ENCODE measurements at regions of chr11 and their contacts with region 1.

Region 1: GRCh38 chr11:62601394-62602140 is at the start of gene MTA2:
- DNase-seq: peak; percentile 86 to 99 (median 91)
- ATAC-seq: peak; percentile 94
- H3K4me3 ChIP-seq: peak within 1 kb of the TSS; percentile 95
- H3K27ac ChIP-seq: peak within 1 kb of the TSS; percentile 97
- H3K4me1 ChIP-seq: peaks cover 14 to 43% of the 10 kb centered on the region in 2 experiments; a peak in 4 of 5 replicates
- H3K27me3 ChIP-seq: no peaks in the 10 kb centered on the region
- CTCF ChIP-seq: no peak; a peak in 1 of 6 replicates
- EP300 ChIP-seq: no peak
- POLR2A ChIP-seq: peak; percentile 81
- RAD21 ChIP-seq: no peak
- polyA plus RNA-seq, gene MTA2: 6.2 to 9.9 TPM

Region 2: GRCh38 chr11:61602775-61603569 is 998.6 kb before region 1 on chr11:
- CTCF ChIA-PET with region 1: no interaction called
- POLR2A ChIA-PET with region 1: no interaction called
- in situ Hi-C with region 1: no loop called
- intact Hi-C with region 1: no loop called
- DNase-seq: peak; percentile 68 to 73 (median 72)
- ATAC-seq: peak; percentile 77
- H3K4me3 ChIP-seq: no peak overlapping the region
- H3K27ac ChIP-seq: no peak overlapping the region
- H3K4me1 ChIP-seq: peaks cover 0 to 9% of the 10 kb centered on the region in 2 experiments; a peak in 3 of 5 replicates
- H3K27me3 ChIP-seq: peaks cover 12 to 76% of the 10 kb centered on the region in 2 experiments
- CTCF ChIP-seq: no peak
- EP300 ChIP-seq: peak; percentile 11; the same call in 1 of the 2 replicates
- POLR2A ChIP-seq: no peak
- RAD21 ChIP-seq: no peak

Region 3: GRCh38 chr11:62567018-62567633 is 34.4 kb before region 1 on chr11:
- CTCF ChIA-PET with region 1: no interaction called
- POLR2A ChIA-PET with region 1: no interaction called
- in situ Hi-C with region 1: no loop called
- intact Hi-C with region 1: no loop called
- DNase-seq: no peak
- ATAC-seq: no peak
- H3K4me3 ChIP-seq: no peak overlapping the region
- H3K27ac ChIP-seq: no peak overlapping the region; the same call in 2 of the 3 replicates
- H3K4me1 ChIP-seq: peaks cover 14 to 20% of the 10 kb centered on the region in 2 experiments; a peak in 4 of 5 replicates
- H3K27me3 ChIP-seq: no peaks in the 10 kb centered on the region
- CTCF ChIP-seq: no peak
- EP300 ChIP-seq: no peak
- POLR2A ChIP-seq: no peak
- RAD21 ChIP-seq: no peak

Region 4: GRCh38 chr11:62612366-62613290 is 11.1 kb after region 1 on chr11 and contains the starts of genes EML3 and ROM1:
- CTCF ChIA-PET with region 1: interaction called, 3 read pairs
- POLR2A ChIA-PET with region 1: interaction called, 11 read pairs
- in situ Hi-C with region 1: no loop called
- intact Hi-C with region 1: no loop called
- DNase-seq: peak; percentile 91 to 95 (median 92)
- ATAC-seq: peak; percentile 83
- H3K4me3 ChIP-seq: peak within 1 kb of the TSS; percentile 75
- H3K27ac ChIP-seq: peak within 1 kb of the TSS; percentile 90
- H3K4me1 ChIP-seq: peaks cover 29 to 65% of the 10 kb centered on the region in 2 experiments
- H3K27me3 ChIP-seq: no peaks in the 10 kb centered on the region
- CTCF ChIP-seq: peak; percentile 79 to 100 (median 100)
- EP300 ChIP-seq: no peak
- POLR2A ChIP-seq: no peak
- RAD21 ChIP-seq: peak; percentile 56 to 64
- polyA plus RNA-seq, gene EML3: 0.32 to 0.59 TPM
- polyA plus RNA-seq, gene ROM1: 0.75 to 1.4 TPM

Region 5: GRCh38 chr11:62645956-62646824 is 44.6 kb after region 1 on chr11 and contains the start of gene GANAB:
- CTCF ChIA-PET with region 1: no interaction called
- POLR2A ChIA-PET with region 1: interaction called, 3 read pairs
- in situ Hi-C with region 1: no loop called
- intact Hi-C with region 1: loop called (anchors 1 kb)
- DNase-seq: peak; percentile 97 to 100 (median 98)
- ATAC-seq: peak; percentile 98
- H3K4me3 ChIP-seq: peak within 1 kb of the TSS; percentile 97
- H3K27ac ChIP-seq: peak within 1 kb of the TSS; percentile 96
- H3K4me1 ChIP-seq: peaks cover 12 to 38% of the 10 kb centered on the region in 2 experiments
- H3K27me3 ChIP-seq: no peaks in the 10 kb centered on the region
- CTCF ChIP-seq: no peak
- EP300 ChIP-seq: peak; percentile 12; the same call in 1 of the 2 replicates
- POLR2A ChIP-seq: peak; percentile 94
- RAD21 ChIP-seq: no peak
- polyA plus RNA-seq, gene GANAB: 6.5 to 17.9 TPM

Region 6: DNA sequence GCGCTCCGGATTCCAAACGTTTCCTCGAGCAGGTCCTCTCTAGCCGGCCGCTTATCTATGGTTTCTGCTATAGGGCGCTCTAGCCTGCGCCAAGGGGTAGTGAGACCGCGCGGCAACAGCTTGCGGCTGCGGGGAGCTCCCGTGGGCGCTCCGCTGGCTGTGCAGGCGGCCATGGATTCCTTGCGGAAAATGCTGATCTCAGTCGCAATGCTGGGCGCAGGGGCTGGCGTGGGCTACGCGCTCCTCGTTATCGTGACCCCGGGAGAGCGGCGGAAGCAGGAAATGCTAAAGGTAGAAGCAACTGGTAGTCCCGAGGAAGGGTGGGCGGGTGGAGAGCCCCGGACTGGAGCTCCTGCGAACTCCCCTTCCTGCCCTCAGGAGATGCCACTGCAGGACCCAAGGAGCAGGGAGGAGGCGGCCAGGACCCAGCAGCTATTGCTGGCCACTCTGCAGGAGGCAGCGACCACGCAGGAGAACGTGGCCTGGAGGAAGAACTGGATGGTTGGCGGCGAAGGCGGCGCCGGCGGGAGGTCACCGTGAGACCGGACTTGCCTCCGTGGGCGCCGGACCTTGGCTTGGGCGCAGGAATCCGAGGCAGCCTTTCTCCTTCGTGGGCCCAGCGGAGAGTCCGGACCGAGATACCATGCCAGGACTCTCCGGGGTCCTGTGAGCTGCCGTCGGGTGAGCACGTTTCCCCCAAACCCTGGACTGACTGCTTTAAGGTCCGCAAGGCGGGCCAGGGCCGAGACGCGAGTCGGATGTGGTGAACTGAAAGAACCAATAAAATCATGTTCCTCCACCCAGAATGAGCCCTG is 70.2 kb after region 1 on chr11 and contains the starts of genes LBHD1 and UQCC3:
- CTCF ChIA-PET with region 1: no interaction called
- POLR2A ChIA-PET with region 1: interaction called, 6 read pairs
- in situ Hi-C with region 1: no loop called
- intact Hi-C with region 1: loop called (anchors 5 kb)
- DNase-seq: peak; percentile 66 to 96 (median 74)
- ATAC-seq: peak; percentile 72
- H3K4me3 ChIP-seq: peak within 1 kb of the TSS; percentile 91
- H3K27ac ChIP-seq: peak within 1 kb of the TSS; percentile 94
- H3K4me1 ChIP-seq: peaks cover 34 to 57% of the 10 kb centered on the region in 2 experiments; a peak in 4 of 5 replicates
- H3K27me3 ChIP-seq: no peaks in the 10 kb centered on the region
- CTCF ChIP-seq: no peak
- EP300 ChIP-seq: peak; percentile 53; the same call in 1 of the 2 replicates
- POLR2A ChIP-seq: peak; percentile 92
- RAD21 ChIP-seq: no peak
- polyA plus RNA-seq, gene LBHD1: 2.6 to 6.9 TPM
- polyA plus RNA-seq, gene UQCC3: 4.8 to 7.6 TPM

Region 7: GRCh38 chr11:63179432-63180041 is 578.0 kb after region 1 on chr11:
- CTCF ChIA-PET with region 1: no interaction called
- POLR2A ChIA-PET with region 1: no interaction called
- in situ Hi-C with region 1: no loop called
- intact Hi-C with region 1: no loop called
- DNase-seq: no peak
- ATAC-seq: no peak
- H3K4me3 ChIP-seq: no peak overlapping the region
- H3K27ac ChIP-seq: no peak overlapping the region
- H3K4me1 ChIP-seq: no peaks in the 10 kb centered on the region
- H3K27me3 ChIP-seq: no peaks in the 10 kb centered on the region
- CTCF ChIP-seq: no peak
- EP300 ChIP-seq: no peak
- POLR2A ChIP-seq: no peak
- RAD21 ChIP-seq: no peak

Region 8: GRCh38 chr11:63321723-63322122 is 720.2 kb after region 1 on chr11:
- CTCF ChIA-PET with region 1: no interaction called
- POLR2A ChIA-PET with region 1: no interaction called
- in situ Hi-C with region 1: no loop called
- intact Hi-C with region 1: no loop called
- DNase-seq: no peak
- ATAC-seq: no peak
- H3K4me3 ChIP-seq: no peak overlapping the region
- H3K27ac ChIP-seq: no peak overlapping the region
- H3K4me1 ChIP-seq: no peaks in the 10 kb centered on the region
- H3K27me3 ChIP-seq: no peaks in the 10 kb centered on the region
- CTCF ChIP-seq: no peak
- EP300 ChIP-seq: no peak
- POLR2A ChIP-seq: no peak
- RAD21 ChIP-seq: no peak